ENCODE measurements at regions of chr3 and their contacts with region 1.

Region 1: DNA sequence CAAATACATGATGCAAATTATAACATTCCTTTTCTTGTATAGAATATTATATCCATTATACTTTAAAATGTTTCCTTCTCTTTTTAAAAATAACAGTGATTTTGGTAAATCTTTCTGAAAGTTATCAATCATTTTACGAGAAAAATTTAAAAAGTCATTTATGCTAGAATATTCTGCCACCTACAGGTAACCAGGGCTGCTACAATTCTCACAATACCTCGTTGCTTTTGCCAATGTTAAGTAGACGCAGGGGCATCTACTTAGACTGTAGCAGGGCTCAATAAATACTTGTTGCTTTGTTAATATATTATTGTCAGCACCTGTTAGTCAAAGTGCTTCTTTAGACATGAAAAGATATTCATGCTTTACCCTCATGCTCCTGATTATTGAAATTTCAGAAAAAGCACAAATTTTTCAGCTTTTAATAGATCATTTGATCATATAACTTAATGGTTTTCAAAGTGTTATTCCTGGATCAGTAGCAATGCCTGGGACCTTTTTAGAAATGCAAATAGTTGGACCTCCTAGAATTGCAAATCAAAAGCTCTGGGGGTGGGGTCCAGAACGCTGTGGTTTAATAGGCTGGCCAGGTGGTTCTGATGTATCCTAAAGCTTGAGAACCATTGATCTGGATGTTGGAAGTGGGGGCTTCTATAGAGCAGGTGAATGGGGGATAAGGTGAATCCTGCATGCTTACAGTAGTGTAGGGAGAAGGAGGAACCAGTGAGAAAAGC is 223.6 kb upstream of the PDZRN3 start:
- DNase-seq: peak; percentile 48
- H3K4me3 ChIP-seq: no peak overlapping the region; a peak in 1 of 4 replicates
- H3K27ac ChIP-seq: no peak overlapping the region
- H3K4me1 ChIP-seq: no peaks in the 10 kb centered on the region
- H3K27me3 ChIP-seq: no peaks in the 10 kb centered on the region
- CTCF ChIP-seq: peak; percentile 94
- EP300 ChIP-seq: no peak
- RAD21 ChIP-seq: peak; percentile 87

Region 2: DNA sequence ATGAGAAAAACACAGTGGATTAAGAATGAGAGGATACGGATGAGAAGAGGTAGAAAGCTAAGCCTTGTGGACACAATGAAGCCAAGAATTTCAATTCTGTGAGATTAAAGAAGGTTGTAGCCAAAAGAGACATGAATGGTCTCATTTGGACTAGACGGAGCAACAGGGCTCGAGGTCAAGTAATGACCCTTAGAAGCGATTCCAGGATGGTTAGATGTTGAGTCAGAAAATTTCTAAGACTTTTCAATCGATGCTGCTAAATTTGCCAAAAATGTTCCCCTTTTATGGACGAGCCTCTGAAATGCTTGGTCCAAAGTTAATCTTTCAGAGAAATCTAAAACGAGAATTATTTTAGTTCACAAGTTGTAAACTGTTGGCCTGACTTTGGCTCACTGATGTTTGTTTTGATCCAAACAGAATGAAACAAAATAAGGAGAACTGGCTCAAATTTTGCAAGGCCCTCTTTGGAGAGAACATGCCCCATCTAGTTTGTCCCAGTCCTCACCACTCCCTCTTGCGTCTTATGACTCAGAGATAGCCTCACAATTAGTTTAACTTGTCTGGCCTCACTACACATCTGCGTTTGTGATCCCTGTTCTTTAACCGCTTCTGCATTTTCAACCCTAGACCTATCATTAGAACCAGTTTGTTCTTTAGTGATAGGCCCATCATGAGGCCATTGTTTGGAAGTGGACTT is 459.1 kb before region 1 on chr3:
- CTCF ChIA-PET with region 1: no interaction called
- POLR2A ChIA-PET with region 1: no interaction called
- DNase-seq: no peak
- H3K4me3 ChIP-seq: no peak overlapping the region
- H3K27ac ChIP-seq: no peak overlapping the region
- H3K4me1 ChIP-seq: no peaks in the 10 kb centered on the region; a peak in 1 of 4 replicates
- H3K27me3 ChIP-seq: no peaks in the 10 kb centered on the region
- CTCF ChIP-seq: no peak
- EP300 ChIP-seq: no peak
- RAD21 ChIP-seq: no peak

Region 3: DNA sequence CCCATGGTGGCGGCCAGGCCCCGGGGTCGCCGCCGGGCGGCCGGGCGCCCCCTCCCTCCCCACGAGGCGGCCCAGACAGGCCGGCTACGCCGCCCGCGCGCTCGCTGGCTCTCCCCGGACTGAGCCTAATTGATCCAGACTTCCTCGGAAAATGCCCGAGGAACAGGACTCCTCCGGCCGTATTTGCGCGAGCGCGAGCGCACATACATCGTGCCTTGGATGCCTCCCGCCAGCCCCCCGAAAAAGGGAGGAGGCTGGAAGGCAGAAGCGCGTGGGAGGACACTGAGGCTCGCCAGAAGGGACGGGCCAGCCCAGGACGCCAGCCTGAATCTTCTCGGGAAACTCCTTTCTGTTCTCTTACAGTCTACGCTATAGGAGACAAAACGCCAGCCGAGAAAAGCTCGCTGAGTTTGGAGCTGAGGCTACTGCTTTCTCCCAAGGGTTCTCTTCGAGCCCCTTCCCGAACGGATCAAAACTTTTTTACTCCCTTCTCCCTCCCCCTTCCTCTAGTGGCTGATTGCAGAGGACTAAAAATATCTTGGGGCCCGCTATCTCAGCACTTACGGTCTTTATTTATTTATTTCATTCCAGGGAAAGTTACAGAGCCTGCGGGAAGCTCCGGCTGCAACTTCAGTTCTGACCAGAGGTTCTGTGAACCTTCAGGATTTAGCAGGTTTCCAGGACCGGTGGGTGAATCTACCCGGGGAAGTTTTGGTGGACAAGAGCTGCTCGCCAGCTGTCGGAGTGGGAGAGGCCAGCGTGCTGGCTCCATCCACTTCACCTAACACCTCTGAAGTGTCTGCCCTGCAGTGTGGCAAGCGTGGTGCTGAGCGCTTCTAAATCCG is 223.3 kb before region 1 on chr3 and contains the start of gene PDZRN3:
- CTCF ChIA-PET with region 1: interaction called, 20 read pairs
- POLR2A ChIA-PET with region 1: no interaction called
- DNase-seq: peak; percentile 54
- H3K4me3 ChIP-seq: peak within 1 kb of the TSS; percentile 76 to 87
- H3K27ac ChIP-seq: peak within 1 kb of the TSS; percentile 74 to 86
- H3K4me1 ChIP-seq: peaks cover 0 to 37% of the 10 kb centered on the region in 2 experiments; a peak in 2 of 4 replicates
- H3K27me3 ChIP-seq: no peaks in the 10 kb centered on the region
- CTCF ChIP-seq: 0 out of 2 replicates have a peak, but pooled peaks have one; percentile 8
- EP300 ChIP-seq: peak in 1 of 2 experiments; percentile 32; a peak in 1 of 4 replicates
- RAD21 ChIP-seq: peak; percentile 13; the same call in 1 of the 2 replicates
- polyA plus RNA-seq, gene PDZRN3: 7.9 and 10.3 TPM in 2 replicates

Region 4: DNA sequence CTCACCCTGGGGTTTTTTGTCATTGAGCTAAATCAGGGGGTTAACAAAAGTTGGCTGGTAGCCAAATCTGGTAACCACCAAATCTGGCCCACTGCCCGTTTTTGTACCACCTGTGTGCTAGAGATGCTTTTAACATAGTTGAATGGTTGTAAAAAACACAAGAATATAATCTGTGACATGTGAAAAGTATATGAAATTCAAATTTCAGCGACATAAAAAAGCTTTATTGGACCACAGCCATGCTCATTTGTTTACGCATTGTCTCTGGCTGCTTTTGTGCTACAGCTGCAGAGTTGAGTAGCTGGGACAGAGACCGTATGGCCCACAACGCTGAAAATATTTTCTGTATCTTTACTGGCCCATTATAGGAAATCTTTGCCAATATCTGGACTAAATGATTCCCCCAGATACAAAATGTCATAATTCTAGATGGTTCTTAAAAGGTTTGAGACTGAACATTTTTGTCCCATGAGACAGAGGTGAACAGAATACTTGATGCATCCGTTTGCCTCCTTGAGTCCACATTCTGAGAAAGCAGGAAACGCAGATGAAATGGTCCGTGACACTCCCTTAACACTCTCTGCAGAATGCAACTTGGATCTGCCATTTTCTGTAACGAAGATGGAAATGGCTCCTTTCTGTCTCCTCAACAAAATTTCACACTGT is 102.7 kb before region 1 on chr3:
- CTCF ChIA-PET with region 1: no interaction called
- POLR2A ChIA-PET with region 1: no interaction called
- DNase-seq: no peak
- H3K4me3 ChIP-seq: no peak overlapping the region
- H3K27ac ChIP-seq: no peak overlapping the region
- H3K4me1 ChIP-seq: peaks cover 0 to 3% of the 10 kb centered on the region in 2 experiments; a peak in 2 of 4 replicates
- H3K27me3 ChIP-seq: no peaks in the 10 kb centered on the region
- CTCF ChIP-seq: no peak
- EP300 ChIP-seq: no peak
- RAD21 ChIP-seq: no peak

Region 5: DNA sequence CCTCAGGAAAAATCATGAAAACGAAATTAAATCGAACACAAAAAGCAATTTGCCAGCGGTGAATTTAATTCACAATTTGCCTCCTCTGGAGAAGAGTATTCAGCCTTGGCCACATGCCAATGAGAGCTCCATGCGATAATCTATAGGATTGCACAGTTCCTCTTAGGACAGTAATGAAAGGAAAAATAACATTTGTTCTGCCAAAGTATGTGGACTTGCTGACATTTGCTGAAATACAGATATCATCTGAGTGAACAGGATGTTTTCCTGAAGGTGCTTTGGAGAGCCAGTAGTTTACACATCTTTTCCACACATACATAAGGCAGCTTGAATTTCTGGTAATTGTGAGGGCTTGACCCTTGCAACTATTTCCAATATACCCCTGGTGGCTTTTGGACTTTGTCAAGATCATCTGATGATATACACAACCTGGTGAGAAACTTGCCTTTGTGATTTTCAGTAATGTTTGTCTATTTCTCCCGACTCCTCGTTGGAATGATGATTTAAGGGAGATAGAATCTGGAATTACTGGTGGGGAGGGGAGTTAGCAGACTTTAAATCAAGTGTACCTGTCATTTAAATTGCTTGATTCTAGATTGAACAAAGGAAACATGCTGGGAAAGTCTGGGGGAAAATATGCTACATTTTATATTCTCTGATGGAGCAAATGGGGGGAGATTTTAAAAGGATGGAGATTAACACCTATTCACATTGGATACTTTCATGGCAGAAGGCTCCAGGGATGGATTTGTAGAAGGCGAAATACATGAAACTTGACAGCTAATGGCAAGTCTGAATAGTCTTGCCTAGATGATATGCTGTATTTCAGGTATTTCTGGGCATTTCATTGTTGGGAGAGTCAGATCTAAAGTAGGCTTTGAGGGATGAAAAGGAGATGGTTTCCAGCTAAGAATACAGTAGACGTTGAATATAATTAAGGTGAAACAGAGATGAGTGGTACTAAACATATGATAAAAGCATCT is 34.7 kb before region 1 on chr3:
- CTCF ChIA-PET with region 1: interaction called, 12 read pairs
- POLR2A ChIA-PET with region 1: no interaction called
- DNase-seq: peak; percentile 31
- H3K4me3 ChIP-seq: peak overlapping the region in 1 of 2 experiments; percentile 3; a peak in 1 of 4 replicates
- H3K27ac ChIP-seq: peak overlapping the region in 1 of 2 experiments; percentile 64; a peak in 2 of 4 replicates
- H3K4me1 ChIP-seq: peaks cover 4 to 6% of the 10 kb centered on the region in 2 experiments; a peak in 3 of 4 replicates
- H3K27me3 ChIP-seq: no peaks in the 10 kb centered on the region
- CTCF ChIP-seq: no peak
- EP300 ChIP-seq: peak in 1 of 2 experiments; percentile 73; a peak in 2 of 4 replicates
- RAD21 ChIP-seq: no peak; the same call in 1 of the 2 replicates

Region 6: DNA sequence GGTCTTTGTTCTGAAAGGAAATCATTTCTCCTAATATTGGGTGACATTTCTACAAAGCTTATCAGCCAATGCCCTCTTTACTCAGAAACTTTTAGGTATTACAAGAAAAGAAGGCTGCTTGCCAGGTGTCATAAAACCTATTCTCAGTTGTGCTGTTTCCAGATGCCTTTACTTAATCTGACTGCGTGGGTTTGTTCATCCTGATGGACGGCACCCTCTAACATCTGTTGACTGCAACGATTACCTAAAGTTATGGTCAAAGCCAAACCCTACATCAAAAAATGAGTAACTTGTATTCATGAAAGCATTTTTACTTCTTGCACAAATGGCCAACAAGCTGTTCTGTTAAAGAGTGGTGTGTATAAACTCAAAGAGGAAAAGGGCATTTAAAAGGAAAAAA is 15.9 kb before region 1 on chr3:
- CTCF ChIA-PET with region 1: interaction called, 33 read pairs
- POLR2A ChIA-PET with region 1: no interaction called
- DNase-seq: no peak
- H3K4me3 ChIP-seq: no peak overlapping the region
- H3K27ac ChIP-seq: no peak overlapping the region
- H3K4me1 ChIP-seq: no peaks in the 10 kb centered on the region
- H3K27me3 ChIP-seq: no peaks in the 10 kb centered on the region
- CTCF ChIP-seq: no peak
- EP300 ChIP-seq: no peak
- RAD21 ChIP-seq: no peak

Region 7: DNA sequence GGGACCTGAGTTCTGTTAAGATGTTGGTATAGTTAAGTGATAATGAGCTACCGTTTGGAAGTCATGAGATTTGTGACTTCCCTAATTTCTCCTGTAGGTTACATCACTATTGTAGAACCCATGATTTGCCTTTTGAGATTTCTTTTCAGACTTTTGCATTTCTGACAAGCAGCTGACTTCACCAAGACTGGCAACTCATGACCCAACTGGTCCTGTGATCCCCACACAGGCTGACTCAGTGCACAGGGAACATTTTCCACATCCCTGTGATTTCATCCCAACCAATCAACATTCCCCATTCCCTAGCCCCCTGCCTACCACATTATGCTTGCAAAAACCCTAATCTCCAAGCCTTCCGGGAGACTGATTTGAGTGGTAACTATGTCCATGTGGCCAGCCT is 18.5 kb after region 1 on chr3:
- CTCF ChIA-PET with region 1: interaction called, 24 read pairs
- POLR2A ChIA-PET with region 1: no interaction called
- DNase-seq: no peak
- H3K4me3 ChIP-seq: no peak overlapping the region
- H3K27ac ChIP-seq: no peak overlapping the region
- H3K4me1 ChIP-seq: no peaks in the 10 kb centered on the region
- H3K27me3 ChIP-seq: no peaks in the 10 kb centered on the region
- CTCF ChIP-seq: no peak
- EP300 ChIP-seq: no peak
- RAD21 ChIP-seq: no peak